ENCODE measurements at regions of chr18 and their contacts with region 1.

Region 1: DNA sequence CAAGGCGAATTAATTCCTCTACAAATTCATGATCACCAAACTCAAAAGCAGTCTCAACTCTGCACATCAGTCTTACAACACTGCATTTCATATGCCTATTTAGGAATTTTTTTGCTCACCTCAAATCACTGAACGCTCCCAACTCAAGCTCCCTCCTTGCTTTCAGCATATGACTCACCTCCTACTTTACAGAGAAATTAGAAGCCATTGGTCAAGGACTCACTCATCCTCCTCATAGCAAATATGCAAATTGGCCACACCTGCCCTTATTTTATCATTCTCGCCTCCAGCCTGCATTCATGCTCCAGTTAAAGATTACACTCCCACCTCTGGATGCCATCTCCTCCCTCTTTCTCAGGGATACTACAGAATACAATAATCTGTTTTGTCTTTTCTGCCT is 148.8 kb downstream of the MBD2 start:
- DNase-seq: no peak
- H3K4me3 ChIP-seq: no peak overlapping the region
- H3K27ac ChIP-seq: no peak overlapping the region
- H3K27me3 ChIP-seq: no peaks in the 10 kb centered on the region
- CTCF ChIP-seq: no peak

Region 2: GRCh38 chr18:52598921-52599320 is 1476.8 kb before region 1 on chr18:
- intact Hi-C with region 1: no loop called
- DNase-seq: no peak
- H3K4me3 ChIP-seq: no peak overlapping the region
- H3K27ac ChIP-seq: no peak overlapping the region
- H3K27me3 ChIP-seq: no peaks in the 10 kb centered on the region
- CTCF ChIP-seq: no peak

Region 3: DNA sequence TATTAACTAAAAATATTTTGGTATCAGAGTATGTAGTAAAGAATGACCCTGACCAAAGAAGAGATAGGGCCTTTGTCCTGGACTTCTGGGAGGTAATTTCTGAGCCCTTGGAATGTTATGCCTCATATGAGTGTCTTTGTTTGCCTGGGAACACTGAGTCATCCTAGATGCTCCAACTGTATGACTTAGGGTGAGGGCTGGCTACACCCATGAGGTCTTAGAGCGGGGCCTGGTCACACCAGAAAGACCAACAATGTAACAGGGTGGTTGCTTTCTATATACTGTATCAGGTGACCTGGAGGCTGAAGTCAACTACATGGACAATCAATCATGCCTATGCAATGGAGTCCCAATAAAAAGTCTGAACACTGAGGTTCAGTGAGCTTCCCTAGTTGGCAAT is 104.4 kb before region 1 on chr18:
- intact Hi-C with region 1: no loop called
- DNase-seq: no peak
- H3K4me3 ChIP-seq: no peak overlapping the region
- H3K27ac ChIP-seq: no peak overlapping the region
- H3K27me3 ChIP-seq: no peaks in the 10 kb centered on the region
- CTCF ChIP-seq: no peak

Region 4: GRCh38 chr18:54112356-54112755 is 36.7 kb after region 1 on chr18:
- intact Hi-C with region 1: loop called in 1 of 2 experiments (anchors 1 kb)
- DNase-seq: no peak
- H3K4me3 ChIP-seq: no peak overlapping the region
- H3K27ac ChIP-seq: no peak overlapping the region
- H3K27me3 ChIP-seq: peaks cover 0 to 5% (median 0%) of the 10 kb centered on the region in 45 donors
- CTCF ChIP-seq: no peak